CD4-positive, alpha-beta memory T cell (primary cell): ENCODE measurements at regions of chr17 and their contacts with region 1.

Region 1: GRCh38 chr17:63741221-63742049 is at the start of gene STRADA:
- DNase-seq: peak; percentile 97 to 99 (median 99)
- H3K4me3 ChIP-seq: peak within 1 kb of the TSS; percentile 78 to 81
- H3K4me3 Mint-ChIP-seq: peak within 1 kb of the TSS; percentile 87 to 96 (median 92)
- H3K27ac ChIP-seq: peak within 1 kb of the TSS; percentile 88
- H3K27ac Mint-ChIP-seq: peak within 1 kb of the TSS; percentile 88 to 98 (median 97)
- H3K4me1 ChIP-seq: peaks cover 14% of the 10 kb centered on the region
- H3K4me1 Mint-ChIP-seq: peaks cover 14 to 32% (median 24%) of the 10 kb centered on the region in 4 donors
- H3K27me3 ChIP-seq: no peaks in the 10 kb centered on the region
- H3K27me3 Mint-ChIP-seq: no peaks in the 10 kb centered on the region
- total RNA-seq, gene STRADA: 55.6 to 58.3 TPM

Region 2: GRCh38 chr17:63516910-63517824 is 224.3 kb before region 1 on chr17:
- CTCF ChIA-PET with region 1: no interaction called
- POLR2A ChIA-PET with region 1: no interaction called
- intact Hi-C with region 1: no loop called
- DNase-seq: no peak
- H3K4me3 ChIP-seq: no peak overlapping the region
- H3K4me3 Mint-ChIP-seq: no peak overlapping the region
- H3K27ac ChIP-seq: no peak overlapping the region
- H3K27ac Mint-ChIP-seq: no peak overlapping the region
- H3K4me1 ChIP-seq: no peaks in the 10 kb centered on the region
- H3K4me1 Mint-ChIP-seq: no peaks in the 10 kb centered on the region
- H3K27me3 ChIP-seq: no peaks in the 10 kb centered on the region
- H3K27me3 Mint-ChIP-seq: peaks cover 3 to 7% of the 10 kb centered on the region in 2 donors

Region 3: DNA sequence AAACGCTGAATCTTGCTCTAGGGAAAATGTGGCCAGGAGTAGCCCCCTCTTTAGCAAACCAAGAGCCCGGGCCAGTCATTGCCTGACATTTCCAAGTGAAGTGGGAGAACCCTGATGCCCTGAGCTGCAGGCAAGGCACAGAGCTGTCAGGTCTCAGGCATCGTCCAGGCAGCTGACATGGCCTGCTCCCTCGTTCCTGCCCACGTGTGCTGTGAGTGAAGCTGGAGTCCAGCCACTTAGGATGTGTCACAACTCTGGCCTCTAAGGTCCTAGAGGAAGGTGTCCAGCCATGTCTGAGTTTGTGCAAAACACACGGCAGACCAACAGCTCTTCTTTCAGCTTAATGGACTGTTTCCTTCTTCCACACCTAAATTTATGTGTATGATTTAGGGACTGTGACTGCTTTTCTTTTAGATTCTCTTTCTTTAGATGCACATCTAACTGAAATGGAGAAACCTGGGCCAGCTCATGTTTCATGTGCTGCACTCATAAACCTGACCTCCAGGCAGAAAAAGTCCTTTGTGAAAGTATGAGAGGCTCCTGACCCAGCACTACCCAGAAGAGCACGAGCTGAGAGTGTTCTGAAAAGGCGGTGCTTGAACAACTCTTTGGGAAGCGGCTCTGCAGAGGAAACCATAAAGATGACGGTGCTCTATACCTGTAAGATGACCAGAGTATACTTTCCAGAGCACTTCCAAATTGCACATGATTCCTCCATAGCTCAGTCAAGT is 26.7 kb before region 1 on chr17:
- CTCF ChIA-PET with region 1: interaction called, 6 read pairs
- POLR2A ChIA-PET with region 1: interaction called, 14 read pairs
- intact Hi-C with region 1: no loop called
- DNase-seq: no peak
- H3K4me3 ChIP-seq: no peak overlapping the region
- H3K4me3 Mint-ChIP-seq: no peak overlapping the region
- H3K27ac ChIP-seq: no peak overlapping the region
- H3K27ac Mint-ChIP-seq: peak overlapping the region in 3 of 7 donors; percentile 6 to 42 (median 7)
- H3K4me1 ChIP-seq: peaks cover 12% of the 10 kb centered on the region
- H3K4me1 Mint-ChIP-seq: peaks cover 10 to 20% (median 13%) of the 10 kb centered on the region in 4 donors
- H3K27me3 ChIP-seq: no peaks in the 10 kb centered on the region
- H3K27me3 Mint-ChIP-seq: no peaks in the 10 kb centered on the region

Region 4: GRCh38 chr17:63751806-63752205 is 10.4 kb after region 1 on chr17:
- CTCF ChIA-PET with region 1: interaction called, 3 read pairs
- POLR2A ChIA-PET with region 1: interaction called, 11 read pairs
- intact Hi-C with region 1: loop called (anchors 1 kb)
- DNase-seq: peak in 4 of 5 donors; percentile 10 to 25 (median 18)
- H3K4me3 ChIP-seq: no peak overlapping the region
- H3K4me3 Mint-ChIP-seq: peak overlapping the region; percentile 25 to 78 (median 61)
- H3K27ac ChIP-seq: peak overlapping the region; percentile 33
- H3K27ac Mint-ChIP-seq: peak overlapping the region; percentile 69 to 93 (median 73)
- H3K4me1 ChIP-seq: peaks cover 10% of the 10 kb centered on the region
- H3K4me1 Mint-ChIP-seq: peaks cover 7 to 16% (median 8%) of the 10 kb centered on the region in 4 donors
- H3K27me3 ChIP-seq: no peaks in the 10 kb centered on the region
- H3K27me3 Mint-ChIP-seq: no peaks in the 10 kb centered on the region

Region 5: DNA sequence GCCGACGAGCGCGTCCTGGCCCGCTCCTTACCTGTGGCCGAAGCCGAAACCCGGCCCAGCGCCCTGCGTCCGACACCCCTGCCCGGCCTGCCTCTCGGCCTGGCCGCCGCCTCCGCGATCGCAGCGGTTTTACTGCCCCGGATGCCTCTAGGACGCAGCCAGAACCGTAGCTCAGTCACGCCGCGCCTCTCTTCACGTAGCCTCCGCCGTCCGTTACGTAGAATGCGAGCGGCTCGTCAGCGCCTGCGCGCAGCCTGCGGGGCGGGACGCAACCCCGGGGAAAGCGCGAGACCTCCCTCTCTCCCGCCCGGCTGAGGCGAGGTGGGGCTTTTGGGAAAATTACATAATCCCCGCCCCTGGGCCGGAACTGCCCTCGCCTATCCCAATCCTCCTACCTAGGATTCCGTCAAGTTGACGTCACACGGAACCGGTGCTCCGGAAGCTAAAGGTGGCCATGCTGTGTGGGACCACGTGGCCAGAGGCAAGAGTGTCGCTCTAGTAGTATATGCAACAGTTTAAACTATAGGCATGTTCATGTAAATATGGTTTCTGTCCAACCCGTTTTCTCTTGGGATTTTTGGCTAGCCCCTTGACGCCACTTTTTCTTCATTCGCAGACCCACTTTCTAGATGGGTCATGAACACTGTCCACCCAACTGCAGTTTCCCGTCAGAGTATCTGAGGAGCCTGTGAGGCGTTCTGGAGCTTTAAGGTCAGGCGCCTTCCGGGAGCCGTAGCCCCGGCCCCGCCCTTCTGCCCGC is 32.1 kb after region 1 on chr17 and contains the start of gene CCDC47:
- CTCF ChIA-PET with region 1: interaction called, 6 read pairs
- POLR2A ChIA-PET with region 1: interaction called, 124 read pairs
- intact Hi-C with region 1: loop called (anchors 1 kb)
- DNase-seq: peak; percentile 99
- H3K4me3 ChIP-seq: peak within 1 kb of the TSS; percentile 87 to 97
- H3K4me3 Mint-ChIP-seq: peak within 1 kb of the TSS; percentile 91 to 100 (median 99)
- H3K27ac ChIP-seq: peak within 1 kb of the TSS; percentile 99
- H3K27ac Mint-ChIP-seq: peak within 1 kb of the TSS; percentile 99 to 100 (median 100)
- H3K4me1 ChIP-seq: peaks cover 66% of the 10 kb centered on the region
- H3K4me1 Mint-ChIP-seq: peaks cover 33 to 81% (median 52%) of the 10 kb centered on the region in 4 donors
- H3K27me3 ChIP-seq: no peaks in the 10 kb centered on the region
- H3K27me3 Mint-ChIP-seq: no peaks in the 10 kb centered on the region
- total RNA-seq, gene CCDC47: 36.7 to 39.0 TPM

Region 6: DNA sequence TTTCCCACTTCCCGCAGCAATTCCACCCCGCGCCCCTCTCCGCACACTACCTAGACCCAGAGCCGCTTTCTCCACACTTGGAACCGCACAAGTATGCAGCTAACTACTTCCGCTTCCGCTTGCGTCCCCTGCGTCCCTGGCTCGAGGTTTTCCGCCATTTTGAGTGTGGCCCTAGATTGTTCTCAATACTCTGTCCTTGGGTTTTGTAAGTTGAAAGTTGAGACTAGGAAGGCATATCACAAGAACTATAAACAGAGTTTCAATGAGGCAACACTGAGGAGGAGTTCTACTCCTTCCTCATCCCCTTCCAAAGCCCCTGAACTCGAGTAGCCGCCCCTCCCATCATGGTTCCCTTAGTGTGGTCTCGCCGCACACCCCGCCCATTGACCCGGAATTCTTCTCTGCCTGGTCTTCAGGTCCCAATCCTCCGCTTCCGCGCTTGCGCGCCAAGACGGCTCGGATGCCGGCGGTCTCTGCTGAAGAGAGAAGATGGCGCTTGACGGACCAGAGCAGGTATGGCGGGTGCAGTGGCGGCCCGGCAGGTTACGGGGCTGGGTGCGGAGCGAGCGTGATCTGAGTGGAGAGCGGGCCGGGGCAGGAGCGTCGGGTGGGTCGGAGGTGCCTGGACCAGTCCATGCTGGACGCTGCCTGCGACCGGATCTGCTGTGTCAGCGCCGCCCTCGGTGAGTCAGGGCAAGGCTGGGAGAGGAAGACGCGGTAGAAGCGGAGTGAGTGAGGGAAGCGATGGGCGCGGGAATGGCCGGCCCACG is 85.8 kb after region 1 on chr17 and contains the starts of genes FTSJ3 and PSMC5:
- CTCF ChIA-PET with region 1: no interaction called
- POLR2A ChIA-PET with region 1: interaction called, 3 read pairs
- intact Hi-C with region 1: loop called (anchors 1 kb)
- DNase-seq: peak; percentile 96 to 98 (median 97)
- H3K4me3 ChIP-seq: peak within 1 kb of the TSS; percentile 93
- H3K4me3 Mint-ChIP-seq: peak within 1 kb of the TSS; percentile 93 to 100 (median 98)
- H3K27ac ChIP-seq: peak within 1 kb of the TSS; percentile 90
- H3K27ac Mint-ChIP-seq: peak within 1 kb of the TSS; percentile 95 to 100 (median 100)
- H3K4me1 ChIP-seq: peaks cover 61% of the 10 kb centered on the region
- H3K4me1 Mint-ChIP-seq: peaks cover 46 to 92% (median 74%) of the 10 kb centered on the region in 4 donors
- H3K27me3 ChIP-seq: no peaks in the 10 kb centered on the region
- H3K27me3 Mint-ChIP-seq: no peaks in the 10 kb centered on the region
- total RNA-seq, gene FTSJ3: 62.1 to 62.2 TPM
- total RNA-seq, gene PSMC5: 121 TPM

Region 7: GRCh38 chr17:63842540-63843386 is 101.3 kb after region 1 on chr17 and contains the start of gene SMARCD2:
- CTCF ChIA-PET with region 1: no interaction called
- POLR2A ChIA-PET with region 1: interaction called, 13 read pairs
- intact Hi-C with region 1: loop called (anchors 1 kb)
- DNase-seq: peak; percentile 97 to 98 (median 98)
- H3K4me3 ChIP-seq: peak within 1 kb of the TSS; percentile 58 to 72
- H3K4me3 Mint-ChIP-seq: peak within 1 kb of the TSS; percentile 86 to 97 (median 94)
- H3K27ac ChIP-seq: peak within 1 kb of the TSS; percentile 84
- H3K27ac Mint-ChIP-seq: peak within 1 kb of the TSS; percentile 87 to 96 (median 95)
- H3K4me1 ChIP-seq: peaks cover 48% of the 10 kb centered on the region
- H3K4me1 Mint-ChIP-seq: peaks cover 17 to 57% (median 35%) of the 10 kb centered on the region in 4 donors
- H3K27me3 ChIP-seq: no peaks in the 10 kb centered on the region
- H3K27me3 Mint-ChIP-seq: no peaks in the 10 kb centered on the region
- total RNA-seq, gene SMARCD2: 113 to 114 TPM